Left lung (tissue), 14 donors: ENCODE measurements at regions of chr13 and their contacts with region 1.

Region 1: DNA sequence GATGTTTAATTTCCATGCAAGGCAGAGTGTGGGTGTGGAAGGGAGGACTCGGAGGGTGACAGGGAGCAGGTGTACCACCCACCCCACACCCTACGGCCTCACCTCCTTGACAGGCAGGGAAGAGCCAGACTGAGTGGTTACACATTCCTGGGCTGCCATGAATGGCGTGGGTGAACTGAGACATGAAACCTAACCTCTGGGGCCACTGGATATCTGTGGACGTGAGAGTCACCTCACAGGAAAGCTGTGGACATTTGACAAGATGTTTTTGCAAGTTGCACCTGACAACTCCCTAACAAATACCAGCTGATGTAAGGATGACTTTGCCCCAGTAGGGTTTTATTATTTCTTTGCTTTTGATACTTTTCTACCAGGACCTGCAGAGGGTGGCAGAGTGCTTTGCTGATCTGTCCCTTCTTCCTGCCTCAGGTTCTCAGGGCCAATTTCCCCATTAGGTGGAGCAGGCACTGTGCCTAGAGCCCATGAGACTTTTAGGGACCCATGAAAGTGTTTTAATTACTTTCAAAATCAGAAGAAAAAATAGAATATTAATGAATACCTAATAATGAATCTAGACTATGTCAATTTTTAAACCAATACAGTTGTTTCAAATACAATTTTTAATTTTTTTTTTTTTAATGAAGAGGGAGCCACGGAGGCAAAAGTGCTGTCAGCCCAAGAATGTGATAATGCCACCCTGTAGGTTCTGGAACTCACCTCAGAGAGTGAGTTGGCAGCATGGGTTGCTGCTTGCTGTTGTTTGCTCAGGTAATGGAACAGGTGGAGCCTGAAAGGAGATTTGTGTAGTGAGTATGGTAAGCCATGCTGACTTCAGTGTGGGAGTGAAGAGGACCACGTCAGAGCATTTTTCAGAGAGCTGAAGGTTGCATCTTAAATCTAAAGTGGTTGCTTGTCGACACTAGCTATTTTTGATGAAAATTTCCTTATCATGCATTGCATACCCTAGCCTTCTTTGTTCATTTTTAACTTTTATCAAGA is 58.0 kb upstream of the CYSLTR2 start:
- DNase-seq: peak in 3 of 4 donors; percentile 31 to 70 (median 50)
- ATAC-seq: peak; percentile 93
- H3K4me3 ChIP-seq: no peak overlapping the region
- H3K27ac ChIP-seq: no peak overlapping the region
- H3K4me1 ChIP-seq: no peaks in the 10 kb centered on the region
- H3K27me3 ChIP-seq: no peaks in the 10 kb centered on the region
- CTCF ChIP-seq: peak; percentile 13 to 46

Region 2: GRCh38 chr13:48769107-48769704 is 173.5 kb after region 1 on chr13:
- intact Hi-C with region 1: loop called in 1 of 2 experiments (anchors 5 kb)
- DNase-seq: peak in 3 of 4 donors; percentile 69 to 82 (median 73)
- ATAC-seq: peak; percentile 100
- H3K4me3 ChIP-seq: no peak overlapping the region
- H3K27ac ChIP-seq: no peak overlapping the region
- H3K4me1 ChIP-seq: peaks cover 0 to 3% of the 10 kb centered on the region in 2 donors
- H3K27me3 ChIP-seq: no peaks in the 10 kb centered on the region
- CTCF ChIP-seq: peak; percentile 98